ENCODE measurements at regions of chr10 and their contacts with region 1.

Region 1: DNA sequence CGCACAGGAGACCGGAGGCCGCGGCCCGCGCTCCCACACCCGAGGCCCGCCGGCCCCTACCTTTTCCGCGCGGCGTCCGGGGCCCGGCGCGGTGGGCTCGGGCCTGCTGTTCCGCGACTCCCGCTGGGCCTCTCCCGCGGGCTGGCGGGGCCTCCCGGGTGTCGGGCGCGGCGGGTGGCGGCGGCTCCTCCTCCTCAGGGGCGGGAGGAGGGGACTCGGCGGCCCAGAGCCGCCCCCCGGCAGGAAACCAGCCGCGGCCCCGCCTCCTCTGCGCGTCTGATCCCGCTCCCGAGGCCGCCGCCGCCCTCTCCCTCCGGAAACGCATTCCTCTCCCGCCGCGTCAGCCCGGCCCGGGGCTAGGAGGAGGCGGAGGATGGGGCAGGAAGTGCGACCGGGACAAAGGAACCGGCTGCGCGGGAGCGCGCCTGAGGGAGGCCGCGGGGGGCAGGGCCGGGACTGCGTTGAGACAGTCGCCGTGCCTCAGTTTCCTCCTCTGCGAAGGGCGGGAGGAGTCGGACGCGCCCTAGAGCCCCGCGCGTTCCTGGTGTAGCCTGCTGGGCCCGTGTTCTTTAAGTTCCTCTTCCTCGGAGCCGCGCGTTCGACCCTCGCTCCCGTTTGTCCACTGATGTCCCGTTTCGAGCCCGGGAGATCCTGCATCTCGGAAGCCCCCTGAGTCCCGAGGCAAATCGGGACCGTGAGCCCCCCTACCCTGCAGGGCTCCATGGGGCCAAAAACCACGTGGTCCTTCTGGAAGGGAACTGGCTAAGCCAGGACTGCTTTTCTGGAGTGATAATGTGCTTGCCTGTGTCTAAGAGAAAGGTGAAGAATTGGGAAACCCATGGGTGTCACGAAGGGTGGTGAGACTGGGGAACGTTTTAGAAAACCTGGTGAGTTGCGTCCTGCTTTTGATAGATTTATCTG is at the start of gene ITGB1:
- DNase-seq: peak; percentile 96
- H3K4me3 ChIP-seq: peak within 1 kb of the TSS; percentile 96 to 98
- H3K27ac ChIP-seq: peak within 1 kb of the TSS; percentile 94 to 97
- H3K4me1 ChIP-seq: no peaks in the 10 kb centered on the region
- H3K27me3 ChIP-seq: no peaks in the 10 kb centered on the region
- CTCF ChIP-seq: no peak
- POLR2A ChIP-seq: peak; percentile 89
- total RNA-seq, gene ITGB1: 246 to 293 TPM

Region 2: DNA sequence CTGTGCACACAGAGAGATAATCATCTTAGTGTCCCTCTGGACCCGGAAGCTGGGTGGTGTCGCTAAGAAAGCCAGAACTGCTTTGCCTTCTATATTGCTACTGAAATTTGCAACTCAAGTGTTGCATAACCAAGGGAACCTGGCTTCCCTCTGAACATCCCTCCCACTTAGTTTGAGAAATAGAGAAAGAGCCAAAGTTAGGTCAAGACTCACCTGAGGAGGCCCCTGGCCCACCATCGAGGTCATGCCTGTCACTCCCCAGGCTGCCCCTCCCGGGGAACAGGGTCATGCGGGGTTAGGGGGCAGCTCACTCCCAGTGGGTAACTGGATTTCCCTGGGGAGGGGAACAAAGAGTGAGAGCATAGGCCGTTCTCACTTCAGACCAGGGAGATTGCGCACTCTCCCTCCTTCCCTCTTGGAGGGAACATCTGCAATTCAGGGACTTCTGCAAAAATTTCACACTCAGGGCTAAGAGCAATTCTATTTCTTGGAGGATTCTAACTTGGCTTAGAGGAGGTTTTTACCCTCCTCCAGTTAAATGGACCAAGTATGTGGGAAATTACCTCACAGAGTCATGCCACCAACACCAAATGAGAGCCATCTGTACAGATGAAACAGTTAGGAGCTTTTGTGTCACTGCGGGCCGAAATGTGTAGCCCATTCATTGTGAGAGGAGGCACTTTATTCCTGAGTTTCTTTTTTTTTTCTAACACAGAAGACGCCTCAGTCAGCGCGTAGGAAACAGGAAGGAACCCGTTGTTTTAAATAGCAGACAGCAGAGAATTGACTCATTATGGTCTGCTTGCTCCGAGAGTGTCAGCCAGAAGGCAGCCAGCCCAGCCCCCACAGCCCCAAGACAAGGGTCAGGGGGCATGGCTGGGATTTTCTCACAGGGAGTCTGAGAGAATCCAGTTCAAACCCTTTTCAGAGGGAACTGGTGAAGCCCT is 1251.0 kb before region 1 on chr10:
- intact Hi-C with region 1: no loop called
- DNase-seq: no peak
- H3K4me3 ChIP-seq: no peak overlapping the region
- H3K27ac ChIP-seq: peak overlapping the region; percentile 39 to 44
- H3K4me1 ChIP-seq: no peaks in the 10 kb centered on the region
- H3K27me3 ChIP-seq: no peaks in the 10 kb centered on the region
- CTCF ChIP-seq: no peak
- POLR2A ChIP-seq: no peak

Region 3: DNA sequence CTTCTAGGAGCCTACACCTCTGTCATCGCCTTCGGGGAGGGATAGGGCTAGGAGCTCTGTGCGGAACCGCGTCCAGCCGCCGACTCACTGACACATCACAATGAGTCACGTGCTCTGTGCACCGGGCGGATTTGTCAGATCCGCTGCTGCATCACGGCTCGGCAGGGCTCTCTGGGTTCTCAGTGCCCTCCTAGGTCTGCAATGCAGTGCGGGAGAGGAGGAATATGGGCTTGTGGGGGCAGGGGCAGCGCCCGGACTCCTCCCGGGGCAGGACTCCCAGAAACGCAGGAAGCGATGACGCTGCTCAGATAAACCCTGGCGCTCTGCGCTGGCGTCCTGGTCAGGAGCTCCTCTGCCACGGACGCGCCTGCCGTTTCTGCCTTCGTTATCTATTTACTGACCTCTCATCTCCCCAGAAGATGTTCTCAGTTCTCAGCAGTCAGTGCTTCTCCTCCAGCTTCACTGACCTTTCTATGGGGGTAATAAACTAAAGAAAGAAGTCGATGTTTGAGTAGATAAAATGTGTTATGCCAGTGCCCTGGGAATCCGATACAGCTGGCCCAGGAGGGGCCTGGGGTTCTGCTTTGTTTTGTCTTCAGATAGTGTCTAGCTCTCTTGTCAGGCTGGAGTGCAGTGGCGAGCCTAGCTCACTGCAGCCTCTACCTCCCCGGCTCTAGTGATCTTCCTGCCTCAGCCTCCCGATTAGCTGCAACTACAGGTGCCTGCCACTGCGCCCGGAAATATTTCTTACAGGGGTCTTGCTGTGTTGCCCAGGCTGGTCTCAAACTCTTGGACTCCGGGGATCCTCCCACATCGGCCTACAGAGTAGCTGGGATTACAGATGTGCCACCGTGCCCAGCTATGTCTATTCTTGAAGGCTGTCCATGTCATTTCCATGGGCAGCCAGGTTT is 22.5 kb after region 1 on chr10:
- intact Hi-C with region 1: loop called (anchors 2 kb)
- DNase-seq: peak; percentile 86
- H3K4me3 ChIP-seq: peak overlapping the region; percentile 40 to 45
- H3K27ac ChIP-seq: peak overlapping the region; percentile 85 to 93
- H3K4me1 ChIP-seq: no peaks in the 10 kb centered on the region
- H3K27me3 ChIP-seq: no peaks in the 10 kb centered on the region
- CTCF ChIP-seq: peak in 1 of 4 experiments; percentile 2
- POLR2A ChIP-seq: peak; percentile 76

Region 4: GRCh38 chr10:33008499-33009243 is 50.3 kb after region 1 on chr10:
- intact Hi-C with region 1: loop called (anchors 5 kb)
- DNase-seq: peak; percentile 74
- H3K4me3 ChIP-seq: no peak overlapping the region
- H3K27ac ChIP-seq: no peak overlapping the region
- H3K4me1 ChIP-seq: peaks cover 3% of the 10 kb centered on the region
- H3K27me3 ChIP-seq: no peaks in the 10 kb centered on the region
- CTCF ChIP-seq: peak; percentile 86 to 96 (median 94)
- POLR2A ChIP-seq: no peak

Measured in prostate gland (tissue), 2 donors.